AG04450 (cell line): ENCODE measurements at regions of chr13 and their contacts with region 1.

Region 1: DNA sequence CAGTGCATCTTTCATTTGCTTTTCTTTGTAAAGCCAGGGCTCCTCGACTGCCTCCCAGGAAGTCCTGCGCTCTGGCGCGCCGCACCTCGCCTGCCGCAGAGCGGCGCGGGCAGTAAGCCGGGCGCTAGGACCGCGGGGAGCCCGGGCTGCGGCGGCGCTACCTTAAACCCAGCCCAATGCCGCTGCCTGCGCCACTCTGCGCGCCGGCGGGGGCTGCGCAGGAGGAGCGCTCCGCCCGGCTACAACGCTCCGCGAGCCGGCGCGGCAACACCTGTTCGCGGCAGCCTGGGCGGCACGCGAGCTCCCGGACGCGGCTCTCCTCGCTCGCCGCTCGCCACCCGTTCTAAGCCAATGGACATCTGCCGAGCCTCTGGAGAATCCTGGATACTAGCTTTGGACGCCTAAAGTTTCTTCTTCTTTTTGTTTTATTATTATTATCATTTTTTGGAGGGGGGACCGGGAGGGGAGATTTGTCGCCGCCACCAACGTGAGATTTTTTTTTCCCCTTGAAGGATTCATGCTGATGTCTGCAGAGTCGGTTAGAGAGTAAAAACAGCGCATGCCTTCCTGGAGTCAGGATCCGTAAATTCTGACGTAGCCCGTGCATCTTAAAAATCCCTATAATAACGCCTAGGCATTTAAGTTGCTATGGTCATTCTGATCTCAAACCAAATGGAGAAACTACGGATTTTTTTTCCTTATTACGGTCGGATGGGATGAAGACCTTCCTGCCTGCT is at the start of gene FGF9:
- DNase-seq: no peak
- H3K4me3 ChIP-seq: peak within 1 kb of the TSS; percentile 61
- H3K27ac ChIP-seq: no peak within 1 kb of the TSS
- H3K27me3 ChIP-seq: peaks cover 48% of the 10 kb centered on the region
- CTCF ChIP-seq: 0 out of 2 replicates have a peak, but pooled peaks have one; percentile 10
- polyA plus RNA-seq, gene FGF9: 0.12 and 0.26 TPM in 2 replicates

Region 2: GRCh38 chr13:21657538-21657937 is 13.5 kb before region 1 on chr13:
- CTCF ChIA-PET with region 1: no interaction called
- POLR2A ChIA-PET with region 1: no interaction called
- DNase-seq: peak; percentile 50
- H3K4me3 ChIP-seq: no peak overlapping the region
- H3K27ac ChIP-seq: no peak overlapping the region
- H3K27me3 ChIP-seq: peaks cover 5% of the 10 kb centered on the region
- CTCF ChIP-seq: no peak

Region 3: DNA sequence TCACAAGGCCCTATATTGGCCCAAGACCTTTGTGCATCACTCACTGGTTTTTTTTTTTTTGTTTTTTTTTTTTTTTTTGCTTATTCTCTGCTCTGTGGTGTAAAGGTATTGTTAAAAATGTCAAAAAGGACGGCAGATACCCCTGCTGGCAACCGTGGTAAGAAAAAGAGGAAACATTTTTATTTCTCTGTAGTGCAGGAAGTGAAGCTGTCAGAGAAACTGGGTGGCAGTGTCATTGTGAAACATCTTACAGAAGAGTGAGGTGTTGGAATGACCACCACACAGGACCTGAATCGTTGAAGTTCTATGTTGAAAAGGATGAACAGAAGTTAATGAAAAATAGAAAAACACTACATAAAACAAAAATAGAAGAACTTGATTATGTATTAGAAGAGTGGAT is 346.2 kb after region 1 on chr13:
- CTCF ChIA-PET with region 1: interaction called, 16 read pairs
- POLR2A ChIA-PET with region 1: no interaction called
- DNase-seq: no peak
- H3K4me3 ChIP-seq: no peak overlapping the region
- H3K27ac ChIP-seq: no peak overlapping the region
- H3K27me3 ChIP-seq: no peaks in the 10 kb centered on the region
- CTCF ChIP-seq: no peak